ENCODE measurements at regions of chr1 and their contacts with region 1.

Region 1: DNA sequence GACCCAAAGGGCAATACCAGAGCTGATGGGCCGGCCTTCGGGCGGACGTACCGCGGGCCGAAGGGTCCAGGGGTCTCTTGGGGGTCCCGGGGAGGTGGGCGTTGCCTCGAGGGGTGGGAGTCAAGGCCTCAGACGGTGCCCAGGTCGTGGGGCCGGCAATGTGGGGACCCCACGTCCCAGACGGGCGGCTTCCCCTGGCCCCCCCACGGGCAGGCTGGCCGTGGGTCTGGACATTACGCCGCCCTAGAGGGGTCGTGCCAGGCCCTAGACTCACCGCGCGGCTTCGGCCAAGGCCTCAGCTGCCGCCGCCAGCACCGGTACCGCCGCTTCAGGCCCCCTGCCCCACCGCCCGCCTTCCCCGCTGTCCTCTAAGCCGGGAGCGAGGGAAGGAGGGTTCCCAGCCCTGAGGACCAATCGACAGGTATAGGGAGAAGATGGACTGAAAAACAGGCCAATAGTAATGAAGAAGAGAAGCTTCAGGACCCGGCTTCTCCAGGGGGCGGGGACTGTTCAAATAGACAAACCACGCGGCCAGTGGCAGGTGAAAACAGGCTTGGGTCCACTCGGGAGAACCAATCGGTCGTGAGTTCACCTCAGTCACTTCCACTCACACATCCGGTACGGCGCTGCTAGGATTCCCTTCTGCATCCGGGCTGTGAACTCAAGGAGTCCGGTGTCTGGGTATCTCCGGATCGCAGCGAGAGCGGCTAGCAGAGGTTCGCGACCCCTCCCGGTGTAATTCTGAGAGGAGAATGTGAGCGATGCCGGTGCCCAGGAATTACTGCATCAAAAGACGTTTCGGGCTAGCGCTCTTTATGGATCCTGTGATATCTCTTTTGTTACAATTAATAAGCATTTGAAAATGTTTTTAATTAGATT is at the start of gene MTOR:
- DNase-seq: peak; percentile 92 to 100 (median 96)
- ATAC-seq: peak; percentile 97
- H3K4me3 ChIP-seq: peak within 1 kb of the TSS; percentile 85 to 90
- H3K4me3 Mint-ChIP-seq: peak within 1 kb of the TSS; percentile 81
- H3K27ac ChIP-seq: peak within 1 kb of the TSS; percentile 61 to 81
- H3K27ac Mint-ChIP-seq: peak within 1 kb of the TSS; percentile 89
- H3K4me1 ChIP-seq: peaks cover 12% of the 10 kb centered on the region
- H3K4me1 Mint-ChIP-seq: peaks cover 20% of the 10 kb centered on the region
- H3K27me3 ChIP-seq: no peaks in the 10 kb centered on the region
- H3K27me3 Mint-ChIP-seq: no peaks in the 10 kb centered on the region
- CTCF ChIP-seq: no peak
- total RNA-seq, gene MTOR: 24.7 to 25.1 TPM

Region 2: DNA sequence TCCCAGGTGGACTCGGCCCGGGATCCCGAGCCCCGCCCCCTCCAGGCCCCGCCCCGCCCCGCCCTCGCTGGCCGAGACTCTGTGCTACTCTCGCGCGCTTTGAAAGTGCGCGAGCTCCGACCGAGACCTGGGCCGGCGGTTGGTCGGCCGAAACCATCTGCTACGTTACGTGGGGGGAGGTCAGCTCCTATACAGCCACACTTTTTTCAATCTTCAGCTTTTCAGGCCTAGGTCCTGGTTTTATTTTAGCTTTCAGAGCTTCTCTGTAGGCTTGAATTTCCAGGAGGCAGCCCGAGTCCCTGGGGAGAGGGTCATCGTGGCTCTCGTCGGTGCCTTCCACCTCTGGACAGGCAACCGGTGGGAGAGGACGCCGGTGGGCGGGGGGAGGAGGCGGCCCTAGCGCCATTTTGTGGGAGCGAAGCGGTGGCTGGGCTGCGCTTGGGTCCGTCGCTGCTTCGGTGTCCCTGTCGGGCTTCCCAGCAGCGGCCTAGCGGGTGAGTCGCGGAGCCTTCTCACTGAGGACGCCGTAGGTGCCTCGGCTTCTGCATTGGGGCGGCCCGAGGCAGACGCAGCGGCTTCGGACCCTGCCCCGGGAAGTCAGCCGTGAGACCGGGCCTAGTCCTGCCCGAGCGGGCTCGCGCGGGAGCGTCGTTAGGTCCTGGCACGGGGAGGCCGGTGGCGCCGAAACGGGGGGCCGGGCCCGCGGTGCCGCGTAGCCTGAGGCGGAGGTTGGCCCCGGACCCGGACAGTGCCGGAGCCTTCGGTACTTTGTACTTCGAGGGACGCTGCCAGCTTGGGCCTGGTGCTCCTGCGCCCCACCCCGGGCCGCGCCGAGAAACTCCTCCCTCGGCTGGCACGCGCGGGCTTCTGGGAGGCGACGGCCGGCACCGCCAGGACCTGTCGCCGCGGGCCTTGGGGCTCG is 249.9 kb before region 1 on chr1 and contains the start of gene TARDBP:
- CTCF ChIA-PET with region 1: no interaction called
- POLR2A ChIA-PET with region 1: interaction called, 4 read pairs
- intact Hi-C with region 1: loop called in 1 of 2 experiments (anchors 1 kb)
- DNase-seq: peak; percentile 82 to 95 (median 90)
- ATAC-seq: peak; percentile 87
- H3K4me3 ChIP-seq: peak within 1 kb of the TSS; percentile 78 to 94
- H3K4me3 Mint-ChIP-seq: peak within 1 kb of the TSS; percentile 92
- H3K27ac ChIP-seq: peak within 1 kb of the TSS; percentile 95 to 97
- H3K27ac Mint-ChIP-seq: peak within 1 kb of the TSS; percentile 97
- H3K4me1 ChIP-seq: peaks cover 38% of the 10 kb centered on the region
- H3K4me1 Mint-ChIP-seq: peaks cover 36% of the 10 kb centered on the region
- H3K27me3 ChIP-seq: no peaks in the 10 kb centered on the region
- H3K27me3 Mint-ChIP-seq: no peaks in the 10 kb centered on the region
- CTCF ChIP-seq: no peak
- total RNA-seq, gene TARDBP: 125 to 131 TPM

Region 3: DNA sequence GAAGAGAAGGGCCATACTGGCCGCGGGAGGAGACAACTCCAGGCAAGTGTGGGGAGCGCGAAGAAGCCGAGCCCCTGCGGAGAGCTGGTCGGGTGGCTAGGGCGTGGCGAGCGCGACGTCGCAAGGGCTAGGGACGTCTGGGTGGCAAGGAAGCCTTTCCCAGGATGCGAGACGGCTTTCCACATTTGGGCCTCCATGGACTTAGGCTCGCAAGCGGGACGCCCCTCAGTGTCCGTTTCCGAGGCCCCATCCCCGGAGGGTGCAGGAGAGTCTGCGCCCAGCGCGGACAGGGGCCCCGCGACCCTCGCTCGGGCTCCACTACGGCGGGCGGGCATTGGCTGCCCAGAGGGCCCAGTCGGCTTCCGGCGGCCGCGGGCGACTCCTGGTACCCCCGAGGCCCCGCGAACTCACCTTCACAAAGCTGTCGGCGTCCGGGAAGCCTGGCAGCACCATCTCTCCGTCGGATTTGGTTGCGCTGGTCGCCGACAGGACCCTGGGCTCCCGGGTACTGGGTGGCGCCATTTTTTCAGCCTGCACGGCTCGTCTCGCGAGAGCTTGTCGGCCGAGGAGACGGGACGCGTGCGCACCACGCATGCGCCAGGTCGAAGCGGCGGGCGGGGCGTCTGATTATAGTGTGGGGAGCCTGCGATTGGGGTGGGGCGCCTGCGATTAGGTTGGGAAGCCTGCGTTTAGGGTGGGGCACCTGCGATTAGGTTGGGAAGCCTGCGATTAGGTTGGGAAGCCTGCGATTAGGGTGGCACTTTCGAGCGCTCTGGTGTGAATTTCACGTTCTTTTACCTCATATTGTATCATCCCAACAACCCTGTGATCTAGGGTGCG is 162.9 kb before region 1 on chr1 and contains the start of gene EXOSC10:
- CTCF ChIA-PET with region 1: no interaction called
- POLR2A ChIA-PET with region 1: no interaction called
- intact Hi-C with region 1: loop called in 1 of 2 experiments (anchors 1 kb)
- DNase-seq: peak; percentile 88 to 97 (median 95)
- ATAC-seq: peak; percentile 97
- H3K4me3 ChIP-seq: peak within 1 kb of the TSS; percentile 70 to 86
- H3K4me3 Mint-ChIP-seq: peak within 1 kb of the TSS; percentile 87
- H3K27ac ChIP-seq: peak within 1 kb of the TSS; percentile 60 to 84
- H3K27ac Mint-ChIP-seq: peak within 1 kb of the TSS; percentile 96
- H3K4me1 ChIP-seq: peaks cover 12% of the 10 kb centered on the region
- H3K4me1 Mint-ChIP-seq: peaks cover 17% of the 10 kb centered on the region
- H3K27me3 ChIP-seq: no peaks in the 10 kb centered on the region
- H3K27me3 Mint-ChIP-seq: no peaks in the 10 kb centered on the region
- CTCF ChIP-seq: no peak
- total RNA-seq, gene EXOSC10: 95.0 to 98.1 TPM

Region 4: GRCh38 chr1:11281518-11282331 is 19.3 kb after region 1 on chr1:
- CTCF ChIA-PET with region 1: interaction called, 8 read pairs
- POLR2A ChIA-PET with region 1: interaction called, 10 read pairs
- intact Hi-C with region 1: loop called in 1 of 2 experiments (anchors 2 kb)
- DNase-seq: no peak
- ATAC-seq: no peak
- H3K4me3 ChIP-seq: no peak overlapping the region
- H3K4me3 Mint-ChIP-seq: peak overlapping the region; percentile 55
- H3K27ac ChIP-seq: peak overlapping the region; percentile 10 to 47
- H3K27ac Mint-ChIP-seq: peak overlapping the region; percentile 89
- H3K4me1 ChIP-seq: peaks cover 72% of the 10 kb centered on the region
- H3K4me1 Mint-ChIP-seq: peaks cover 80% of the 10 kb centered on the region
- H3K27me3 ChIP-seq: no peaks in the 10 kb centered on the region
- H3K27me3 Mint-ChIP-seq: no peaks in the 10 kb centered on the region
- CTCF ChIP-seq: no peak

Region 5: GRCh38 chr1:11681071-11681771 is 418.8 kb after region 1 on chr1 and contains the start of gene MAD2L2:
- CTCF ChIA-PET with region 1: no interaction called
- POLR2A ChIA-PET with region 1: no interaction called
- intact Hi-C with region 1: loop called in 1 of 2 experiments (anchors 1 kb)
- DNase-seq: peak; percentile 75 to 93 (median 91)
- ATAC-seq: peak; percentile 91
- H3K4me3 ChIP-seq: peak within 1 kb of the TSS; percentile 91 to 95
- H3K4me3 Mint-ChIP-seq: peak within 1 kb of the TSS; percentile 89
- H3K27ac ChIP-seq: peak within 1 kb of the TSS; percentile 54 to 69
- H3K27ac Mint-ChIP-seq: peak within 1 kb of the TSS; percentile 91
- H3K4me1 ChIP-seq: peaks cover 14% of the 10 kb centered on the region
- H3K4me1 Mint-ChIP-seq: peaks cover 18% of the 10 kb centered on the region
- H3K27me3 ChIP-seq: peaks cover 0 to 2% of the 10 kb centered on the region in 2 experiments
- H3K27me3 Mint-ChIP-seq: peaks cover 4% of the 10 kb centered on the region
- CTCF ChIP-seq: no peak
- total RNA-seq, gene MAD2L2: 28.7 to 29.4 TPM

Measured in CD8-positive, alpha-beta T cell (primary cell).